ENCODE measurements at regions of chr5 and their contacts with region 1.

Region 1: DNA sequence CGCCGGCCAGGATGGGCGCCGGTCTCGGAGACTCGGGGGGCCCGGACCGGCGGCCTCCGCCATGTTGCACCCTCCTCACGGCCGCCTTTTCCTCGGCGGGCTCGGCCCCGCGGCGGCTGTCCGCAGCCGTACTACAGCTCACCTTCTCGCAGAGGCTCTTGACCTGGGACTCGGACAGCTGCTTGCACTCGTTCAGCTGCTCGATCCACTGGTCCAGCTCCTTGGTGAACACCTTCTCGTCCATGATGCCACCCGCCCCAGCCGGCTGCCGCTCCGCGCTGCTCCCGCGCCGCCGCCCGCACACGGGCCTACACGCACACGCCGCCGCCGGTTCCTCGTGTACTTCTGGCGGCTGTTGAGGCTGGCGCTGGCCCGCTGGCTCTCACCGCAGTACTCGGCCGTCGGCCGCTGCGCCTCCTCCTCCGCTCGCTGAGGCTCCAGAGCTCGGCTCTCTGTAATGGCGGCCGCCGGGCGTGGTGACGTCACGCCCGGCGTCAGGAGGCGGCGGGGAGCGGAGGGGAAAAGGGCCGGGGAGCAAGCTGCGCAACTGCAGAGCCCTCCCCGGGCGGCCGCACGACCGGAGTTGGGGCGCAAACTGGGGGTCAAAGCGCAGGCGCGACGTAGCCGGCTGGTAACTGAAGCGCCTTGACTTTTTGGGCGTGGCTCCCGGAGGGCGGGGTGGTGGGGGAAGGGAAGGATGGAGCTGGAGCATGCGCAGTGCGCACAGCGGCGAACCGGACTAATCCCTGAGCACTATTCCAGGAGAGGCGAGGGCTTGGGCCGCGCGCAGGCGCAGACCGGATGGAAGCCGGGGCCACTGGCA is at the start of gene PPP2CA:
- DNase-seq: peak; percentile 99 to 100 (median 99)
- H3K4me3 ChIP-seq: peak within 1 kb of the TSS; percentile 87
- H3K4me3 Mint-ChIP-seq: peak within 1 kb of the TSS; percentile 77 to 99 (median 97)
- H3K27ac ChIP-seq: peak within 1 kb of the TSS; percentile 100
- H3K27ac Mint-ChIP-seq: peak within 1 kb of the TSS; percentile 98 to 100 (median 99)
- H3K4me1 ChIP-seq: peaks cover 51% of the 10 kb centered on the region
- H3K4me1 Mint-ChIP-seq: peaks cover 40 to 66% (median 48%) of the 10 kb centered on the region in 4 donors
- H3K27me3 ChIP-seq: no peaks in the 10 kb centered on the region
- H3K27me3 Mint-ChIP-seq: no peaks in the 10 kb centered on the region
- total RNA-seq, gene PPP2CA: 106 to 108 TPM

Region 2: DNA sequence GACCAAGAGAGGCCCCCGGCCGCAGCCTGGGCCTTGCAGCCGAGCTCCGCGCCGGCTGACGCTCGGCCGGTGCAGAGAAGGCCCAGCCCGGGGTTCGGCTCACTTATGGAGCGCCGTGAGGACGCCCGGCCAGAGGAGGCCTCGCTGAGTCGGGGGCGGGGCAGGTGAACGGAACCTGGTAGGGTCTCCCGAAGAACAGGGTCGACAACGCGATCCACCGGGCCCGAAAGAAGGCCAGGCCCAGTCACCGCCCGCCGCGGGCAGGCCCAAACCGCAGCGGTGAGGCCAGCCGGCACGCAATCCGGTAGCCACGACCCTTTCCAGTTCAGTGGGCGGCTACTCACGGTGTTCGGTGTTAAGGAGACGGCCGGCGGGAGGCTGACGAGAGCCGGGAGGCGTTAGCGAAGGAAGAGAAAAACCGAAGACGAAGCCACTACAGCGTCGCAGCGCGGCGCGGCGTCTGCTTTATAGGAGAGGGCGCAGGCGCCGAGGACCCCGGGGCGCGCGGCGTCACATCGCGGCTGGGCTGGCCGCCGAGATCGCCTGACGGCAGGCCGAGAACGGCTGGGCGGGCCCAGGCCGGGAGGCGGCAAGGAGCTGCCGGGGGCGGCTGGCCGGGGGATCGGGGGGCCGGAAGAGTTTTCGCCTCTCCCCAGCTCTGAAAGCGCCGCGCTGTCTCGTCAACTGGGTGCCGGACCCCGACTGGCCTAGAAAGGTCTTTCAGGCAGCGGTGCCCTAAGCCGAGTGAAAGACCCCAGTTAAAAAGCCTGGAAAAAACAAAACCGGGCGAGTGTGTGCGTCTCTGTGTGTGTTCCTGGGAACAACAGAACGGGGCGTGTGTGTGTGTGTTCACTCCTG is 49.1 kb before region 1 on chr5 and contains the start of gene SKP1:
- CTCF ChIA-PET with region 1: interaction called, 13 read pairs
- POLR2A ChIA-PET with region 1: interaction called, 119 read pairs
- intact Hi-C with region 1: loop called (anchors 1 kb)
- DNase-seq: peak; percentile 81 to 94 (median 91)
- H3K4me3 ChIP-seq: peak within 1 kb of the TSS; percentile 71 to 89
- H3K4me3 Mint-ChIP-seq: peak within 1 kb of the TSS; percentile 98 to 99 (median 98)
- H3K27ac ChIP-seq: peak within 1 kb of the TSS; percentile 97
- H3K27ac Mint-ChIP-seq: peak within 1 kb of the TSS; percentile 97 to 99 (median 98)
- H3K4me1 ChIP-seq: peaks cover 41% of the 10 kb centered on the region
- H3K4me1 Mint-ChIP-seq: peaks cover 21 to 46% (median 30%) of the 10 kb centered on the region in 4 donors
- H3K27me3 ChIP-seq: no peaks in the 10 kb centered on the region
- H3K27me3 Mint-ChIP-seq: no peaks in the 10 kb centered on the region
- total RNA-seq, gene SKP1: 234 to 246 TPM

Region 3: DNA sequence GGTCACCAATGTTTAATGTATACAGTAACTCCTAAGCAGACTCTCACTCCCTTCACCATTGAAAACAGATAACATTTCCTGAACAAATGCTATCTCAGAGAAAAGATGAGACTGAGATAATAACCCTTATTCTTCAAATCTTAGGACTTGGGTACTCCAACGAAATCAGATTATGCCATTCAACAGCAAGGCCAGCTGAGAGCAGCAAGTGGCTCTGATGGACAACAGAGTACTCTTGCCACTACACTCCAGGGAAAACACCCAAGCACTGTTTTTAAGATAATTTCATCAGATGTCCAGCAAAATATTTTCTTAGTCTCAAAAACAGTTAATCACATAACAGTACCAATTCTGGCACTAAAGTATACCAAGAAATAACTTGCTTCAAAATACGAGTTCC is 10.1 kb before region 1 on chr5:
- CTCF ChIA-PET with region 1: interaction called, 15 read pairs
- POLR2A ChIA-PET with region 1: interaction called, 25 read pairs
- intact Hi-C with region 1: no loop called
- DNase-seq: no peak
- H3K4me3 ChIP-seq: no peak overlapping the region
- H3K4me3 Mint-ChIP-seq: peak overlapping the region in 4 of 8 donors; percentile 25 to 68 (median 52)
- H3K27ac ChIP-seq: no peak overlapping the region
- H3K27ac Mint-ChIP-seq: peak overlapping the region in 5 of 7 donors; percentile 29 to 65 (median 53)
- H3K4me1 ChIP-seq: peaks cover 96% of the 10 kb centered on the region
- H3K4me1 Mint-ChIP-seq: peaks cover 52 to 88% (median 68%) of the 10 kb centered on the region in 4 donors
- H3K27me3 ChIP-seq: no peaks in the 10 kb centered on the region
- H3K27me3 Mint-ChIP-seq: no peaks in the 10 kb centered on the region

Region 4: DNA sequence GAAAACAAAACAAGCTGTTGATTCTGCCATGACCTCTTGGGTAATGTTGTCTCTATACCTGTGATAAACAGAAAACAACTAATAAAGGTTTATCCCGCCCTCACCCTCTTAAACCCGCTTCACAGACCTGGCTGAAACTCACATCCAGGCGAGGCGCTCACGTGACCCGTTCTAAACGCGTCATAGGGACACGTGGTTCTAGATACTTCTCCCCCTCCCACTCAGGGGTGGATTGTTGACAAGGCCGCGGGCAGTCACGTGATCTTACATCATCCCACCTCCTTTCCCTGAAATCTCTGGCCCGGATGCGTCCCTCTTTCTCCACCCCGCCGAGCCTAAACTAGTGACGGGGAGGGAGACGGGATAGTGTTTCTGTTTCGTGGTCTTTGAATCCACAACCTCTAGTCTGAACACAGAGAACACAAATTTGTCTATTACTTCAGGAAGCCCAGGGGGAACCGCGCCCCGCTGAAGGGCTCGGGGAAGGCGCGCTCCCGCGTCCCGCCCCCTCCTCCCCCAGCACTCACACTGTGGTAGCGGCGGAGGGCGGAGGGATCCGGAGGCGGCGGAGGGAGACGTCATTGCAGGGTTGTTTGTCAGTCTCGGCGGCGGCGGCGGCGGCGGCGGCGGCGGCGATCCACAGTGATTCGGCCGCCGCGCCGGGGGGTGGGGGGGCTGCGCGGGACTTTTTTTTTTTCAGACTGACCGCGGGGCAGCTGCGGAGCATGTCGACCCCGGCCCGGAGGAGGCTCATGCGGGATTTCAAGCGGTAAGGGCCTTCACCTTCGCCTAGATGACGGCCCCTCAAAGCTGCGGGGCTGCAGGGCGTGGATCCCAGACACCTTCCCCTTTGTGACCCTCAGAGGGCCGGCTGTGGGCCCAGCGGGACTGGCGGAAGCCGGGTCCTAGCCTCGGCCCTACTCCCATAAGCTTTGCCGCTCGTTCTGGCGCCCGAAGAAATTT is 145.3 kb after region 1 on chr5 and contains the start of gene UBE2B:
- CTCF ChIA-PET with region 1: no interaction called
- POLR2A ChIA-PET with region 1: interaction called, 37 read pairs
- intact Hi-C with region 1: no loop called
- DNase-seq: peak; percentile 98 to 99 (median 98)
- H3K4me3 ChIP-seq: peak within 1 kb of the TSS; percentile 86 to 92
- H3K4me3 Mint-ChIP-seq: peak within 1 kb of the TSS; percentile 96 to 99 (median 98)
- H3K27ac ChIP-seq: peak within 1 kb of the TSS; percentile 99
- H3K27ac Mint-ChIP-seq: peak within 1 kb of the TSS; percentile 97 to 100 (median 100)
- H3K4me1 ChIP-seq: peaks cover 52% of the 10 kb centered on the region
- H3K4me1 Mint-ChIP-seq: peaks cover 40 to 78% (median 49%) of the 10 kb centered on the region in 4 donors
- H3K27me3 ChIP-seq: no peaks in the 10 kb centered on the region
- H3K27me3 Mint-ChIP-seq: peaks cover 0 to 5% of the 10 kb centered on the region in 2 donors
- total RNA-seq, gene UBE2B: 121 to 124 TPM

Region 5: DNA sequence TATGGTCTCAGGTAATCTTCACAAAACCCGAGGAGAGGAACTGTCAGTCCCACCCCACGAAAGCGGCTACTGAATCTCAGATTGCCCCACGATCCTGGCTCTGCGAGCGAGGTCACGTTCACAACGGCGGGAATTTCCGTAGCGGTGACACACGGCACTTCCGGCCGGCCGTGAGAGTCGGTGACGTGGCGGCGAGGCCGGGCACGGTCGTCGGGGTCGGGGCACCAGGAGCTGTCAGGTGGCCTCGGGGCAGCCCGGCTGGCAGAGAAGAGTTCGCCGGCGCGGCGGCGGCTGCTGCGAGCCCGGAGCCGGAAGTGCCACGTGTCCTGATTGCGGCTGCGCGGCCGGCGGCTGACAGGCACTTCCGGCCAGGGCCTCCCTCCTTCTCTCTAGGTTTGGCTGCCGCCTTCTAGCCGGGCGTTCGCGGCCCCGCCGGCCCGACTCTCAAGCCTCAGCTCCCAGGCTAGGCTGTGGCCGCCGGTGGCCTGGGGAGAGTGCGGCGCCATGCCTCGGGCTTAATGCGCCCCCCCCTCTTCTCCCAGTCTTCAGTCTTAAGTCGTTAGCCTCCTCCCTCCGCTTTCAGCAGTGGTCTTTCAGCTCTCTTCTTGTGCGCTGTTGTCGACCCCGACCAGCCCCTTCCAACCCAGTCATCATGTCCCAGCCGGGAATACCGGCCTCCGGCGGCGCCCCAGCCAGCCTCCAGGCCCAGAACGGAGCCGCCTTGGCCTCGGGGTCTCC is 422.8 kb after region 1 on chr5 and contains the start of gene SEC24A:
- CTCF ChIA-PET with region 1: interaction called, 3 read pairs
- POLR2A ChIA-PET with region 1: interaction called, 3 read pairs
- intact Hi-C with region 1: loop called (anchors 1 kb)
- DNase-seq: peak; percentile 88 to 93 (median 90)
- H3K4me3 ChIP-seq: peak within 1 kb of the TSS; percentile 94 to 96
- H3K4me3 Mint-ChIP-seq: peak within 1 kb of the TSS; percentile 89 to 100 (median 97)
- H3K27ac ChIP-seq: peak within 1 kb of the TSS; percentile 99
- H3K27ac Mint-ChIP-seq: peak within 1 kb of the TSS; percentile 96 to 100 (median 99)
- H3K4me1 ChIP-seq: peaks cover 23% of the 10 kb centered on the region
- H3K4me1 Mint-ChIP-seq: peaks cover 16 to 33% (median 23%) of the 10 kb centered on the region in 4 donors
- H3K27me3 ChIP-seq: no peaks in the 10 kb centered on the region
- H3K27me3 Mint-ChIP-seq: no peaks in the 10 kb centered on the region
- total RNA-seq, gene SEC24A: 16.1 to 16.6 TPM

Measured in CD4-positive, alpha-beta memory T cell (primary cell).